ENCODE measurements at regions of chr4 and their contacts with region 1.

Region 1: GRCh38 chr4:94732358-94732698 is 25.4 kb upstream of the BMPR1B start:
- DNase-seq: no peak
- H3K4me3 ChIP-seq: no peak overlapping the region
- H3K27ac ChIP-seq: no peak overlapping the region
- H3K4me1 ChIP-seq: no peaks in the 10 kb centered on the region
- H3K27me3 ChIP-seq: no peaks in the 10 kb centered on the region
- CTCF ChIP-seq: no peak

Region 2: DNA sequence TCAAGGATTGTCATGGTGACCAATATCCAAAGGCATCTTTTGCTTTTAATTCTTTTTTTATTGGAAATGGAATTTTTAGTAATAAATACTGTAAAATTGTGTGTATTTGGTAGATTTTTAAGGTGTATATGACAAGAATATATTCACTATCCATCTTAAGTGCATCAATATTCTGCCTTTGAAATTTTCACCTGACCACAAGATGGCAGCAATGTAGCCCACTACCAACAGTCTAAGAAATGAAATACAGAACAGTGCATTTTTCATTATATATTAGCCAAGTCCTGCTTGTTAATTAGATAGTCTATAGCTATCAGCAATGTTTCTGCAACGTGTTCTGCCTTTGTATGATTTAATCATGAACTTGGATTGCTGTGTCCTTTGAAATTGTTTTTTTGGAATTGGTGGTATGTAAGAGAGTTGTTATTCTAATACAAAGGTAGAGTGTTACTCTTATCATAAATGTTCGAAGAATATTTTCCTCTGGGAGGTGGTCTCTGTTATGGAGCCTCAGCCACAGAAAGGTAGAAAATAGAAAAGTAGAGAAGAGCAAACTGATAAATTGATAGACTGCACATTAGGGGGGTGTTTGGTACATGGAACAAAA is 427.9 kb before region 1 on chr4:
- CTCF ChIA-PET with region 1: no interaction called
- dilution Hi-C with region 1: no loop called
- in situ Hi-C with region 1: no loop called
- intact Hi-C with region 1: loop called (anchors 5 kb)
- DNase-seq: peak; percentile 15
- H3K4me3 ChIP-seq: no peak overlapping the region
- H3K27ac ChIP-seq: no peak overlapping the region
- H3K4me1 ChIP-seq: no peaks in the 10 kb centered on the region
- H3K27me3 ChIP-seq: no peaks in the 10 kb centered on the region
- CTCF ChIP-seq: peak; percentile 52 to 65

Region 3: GRCh38 chr4:94621491-94622080 is 110.7 kb before region 1 on chr4:
- CTCF ChIA-PET with region 1: no interaction called
- dilution Hi-C with region 1: no loop called
- in situ Hi-C with region 1: no loop called
- intact Hi-C with region 1: loop called (anchors 1 kb)
- DNase-seq: peak; percentile 9
- H3K4me3 ChIP-seq: no peak overlapping the region
- H3K27ac ChIP-seq: no peak overlapping the region
- H3K4me1 ChIP-seq: no peaks in the 10 kb centered on the region
- H3K27me3 ChIP-seq: no peaks in the 10 kb centered on the region
- CTCF ChIP-seq: peak; percentile 62 to 74